ENCODE measurements at regions of chrX and their contacts with region 1.

Region 1: GRCh38 chrX:134868771-134869495 is 121.9 kb upstream of the SMIM10 start:
- DNase-seq: no peak
- H3K4me3 ChIP-seq: no peak overlapping the region
- H3K27ac ChIP-seq: no peak overlapping the region
- H3K4me1 ChIP-seq: no peaks in the 10 kb centered on the region
- H3K27me3 ChIP-seq: no peaks in the 10 kb centered on the region
- CTCF ChIP-seq: no peak
- POLR2A ChIP-seq: no peak

Region 2: GRCh38 chrX:134929808-134930207 is 60.9 kb after region 1 on chrX:
- intact Hi-C with region 1: loop called (anchors 10 kb)
- DNase-seq: no peak
- H3K4me3 ChIP-seq: no peak overlapping the region
- H3K27ac ChIP-seq: no peak overlapping the region
- H3K4me1 ChIP-seq: no peaks in the 10 kb centered on the region
- H3K27me3 ChIP-seq: peaks cover 0 to 3% (median 0%) of the 10 kb centered on the region in 7 donors
- CTCF ChIP-seq: no peak
- POLR2A ChIP-seq: no peak